Upper lobe of right lung (tissue), 1 donor: ENCODE measurements at regions of chr20 and their contacts with region 1.

Region 1: GRCh38 chr20:24718696-24719095 is 230.4 kb upstream of the CST7 start:
- DNase-seq: no peak
- ATAC-seq: no peak
- H3K4me3 ChIP-seq: no peak overlapping the region
- H3K27ac ChIP-seq: no peak overlapping the region
- H3K4me1 ChIP-seq: no peaks in the 10 kb centered on the region
- H3K27me3 ChIP-seq: peaks cover 19% of the 10 kb centered on the region
- CTCF ChIP-seq: no peak

Region 2: DNA sequence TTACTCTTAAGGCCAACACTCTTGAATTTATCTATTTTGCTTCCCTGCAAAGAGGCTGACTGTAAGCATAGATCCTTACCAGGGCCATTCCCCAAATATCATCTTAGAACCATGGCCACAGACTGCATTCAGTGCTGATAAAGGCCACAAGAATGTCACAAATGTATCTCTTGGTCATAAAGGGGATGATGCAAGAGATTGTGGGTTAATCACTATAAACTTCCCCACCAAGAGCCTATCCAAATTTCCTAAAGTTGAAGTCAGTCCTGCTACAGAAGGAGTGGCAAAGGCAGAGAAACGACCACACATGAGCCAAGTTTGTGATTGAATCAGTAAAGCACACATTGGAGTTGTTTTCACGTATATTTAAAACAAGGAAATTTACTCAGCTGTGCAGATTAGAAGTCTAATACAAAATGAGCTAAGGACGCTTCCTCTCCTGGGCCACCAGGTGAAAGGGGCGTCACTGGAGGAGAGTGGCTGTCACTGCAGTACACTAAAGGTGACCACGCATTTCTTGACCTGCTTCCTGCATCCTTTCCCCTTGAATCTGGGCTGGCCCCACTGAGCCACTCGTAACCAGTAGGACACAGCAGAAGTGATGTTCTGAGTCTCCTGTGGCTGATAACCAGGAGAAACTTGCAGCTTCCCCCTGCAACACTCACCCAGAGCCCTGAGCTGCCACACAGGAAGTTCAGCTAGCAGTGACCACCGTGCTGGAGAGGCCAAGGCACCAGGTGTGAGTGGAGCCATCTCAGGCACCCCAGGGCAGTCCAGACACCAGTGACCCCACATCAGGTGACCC is 67.3 kb before region 1 on chr20:
- intact Hi-C with region 1: loop called (anchors 10 kb)
- DNase-seq: no peak
- ATAC-seq: peak; percentile 13
- H3K4me3 ChIP-seq: no peak overlapping the region
- H3K27ac ChIP-seq: no peak overlapping the region
- H3K4me1 ChIP-seq: no peaks in the 10 kb centered on the region
- H3K27me3 ChIP-seq: peaks cover 3% of the 10 kb centered on the region
- CTCF ChIP-seq: no peak

Region 3: GRCh38 chr20:24863356-24863755 is 144.7 kb after region 1 on chr20:
- intact Hi-C with region 1: no loop called
- DNase-seq: no peak
- ATAC-seq: no peak
- H3K4me3 ChIP-seq: no peak overlapping the region
- H3K27ac ChIP-seq: no peak overlapping the region
- H3K4me1 ChIP-seq: no peaks in the 10 kb centered on the region
- H3K27me3 ChIP-seq: no peaks in the 10 kb centered on the region
- CTCF ChIP-seq: no peak